ENCODE measurements at regions of chr17 and their contacts with region 1.

Region 1: DNA sequence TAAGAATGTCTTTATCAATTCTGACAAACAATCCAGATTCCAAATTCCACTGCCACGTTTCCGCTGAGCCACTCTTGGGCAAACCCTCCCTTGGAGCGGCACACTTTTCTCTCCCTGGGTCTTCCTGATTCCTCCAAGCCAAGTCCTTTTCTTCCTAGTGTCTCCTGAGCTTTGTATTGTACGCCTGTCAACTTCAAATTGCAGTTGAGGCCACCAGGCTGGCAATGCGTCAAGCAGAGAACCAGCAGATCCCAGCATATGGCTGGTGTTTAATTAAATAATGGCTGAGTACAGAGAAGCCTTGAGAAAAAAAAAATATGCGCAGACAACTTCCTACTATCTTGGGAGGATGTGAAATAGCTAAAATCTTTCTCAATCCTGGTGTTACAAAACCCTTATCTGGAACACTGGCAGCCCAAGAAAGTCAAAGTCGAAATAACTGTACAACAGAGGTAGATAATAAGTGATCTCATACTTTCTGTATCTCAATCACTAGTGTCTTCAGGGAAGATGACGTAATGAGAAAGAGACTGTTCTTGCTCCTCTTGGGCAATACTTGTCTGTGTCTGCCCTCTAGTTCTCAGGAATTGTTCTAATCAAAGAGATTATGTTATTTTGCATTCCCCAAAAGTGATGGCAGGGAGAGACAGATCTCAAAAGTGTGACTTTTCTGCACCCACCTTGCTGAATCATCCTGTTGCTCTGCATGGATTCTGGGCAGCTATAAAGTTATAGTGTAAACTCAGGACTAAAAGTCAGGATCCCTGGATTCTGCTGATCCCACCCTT is 15.0 kb downstream of the SMIM36 start:
- DNase-seq: no peak
- H3K4me3 Mint-ChIP-seq: no peak overlapping the region
- H3K27ac Mint-ChIP-seq: no peak overlapping the region
- H3K4me1 Mint-ChIP-seq: peaks cover 26% of the 10 kb centered on the region
- H3K27me3 Mint-ChIP-seq: no peaks in the 10 kb centered on the region
- CTCF ChIP-seq: no peak

Region 2: DNA sequence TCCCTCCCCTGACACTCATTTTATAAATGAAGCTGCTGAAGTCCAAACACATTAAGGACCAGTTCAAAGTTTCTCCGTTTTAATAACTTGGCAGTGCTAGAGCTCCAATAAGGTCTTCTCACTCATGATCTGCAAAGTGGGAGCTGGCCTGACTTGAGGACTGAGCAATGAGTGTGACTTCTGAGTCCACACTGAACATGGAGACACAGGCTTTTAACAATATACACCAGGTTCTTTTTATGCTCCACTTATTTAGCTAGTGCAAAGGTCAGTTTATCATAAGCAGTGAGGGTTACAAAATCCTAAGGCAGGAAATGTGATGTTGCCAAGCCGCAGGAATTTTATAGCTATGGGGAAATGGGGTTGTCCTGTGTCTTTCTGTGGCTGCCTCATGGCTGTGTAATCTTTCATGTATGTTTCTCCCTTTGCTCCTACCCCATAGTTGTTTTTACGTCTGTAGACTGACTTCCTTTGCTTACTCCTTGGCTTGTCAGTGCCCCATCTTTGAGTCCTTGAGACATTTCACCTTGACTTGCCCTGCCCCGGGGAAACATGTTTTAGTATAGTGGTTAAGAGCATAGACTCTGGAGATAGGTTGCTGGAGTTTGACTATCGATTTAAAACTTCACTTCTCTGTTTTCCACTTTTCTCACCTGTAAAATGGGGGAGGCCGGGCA is 62.5 kb before region 1 on chr17:
- CTCF ChIA-PET with region 1: no interaction called
- intact Hi-C with region 1: loop called (anchors 5 kb)
- DNase-seq: peak; percentile 52
- H3K4me3 Mint-ChIP-seq: peak overlapping the region; percentile 25
- H3K27ac Mint-ChIP-seq: peak overlapping the region; percentile 90
- H3K4me1 Mint-ChIP-seq: peaks cover 57% of the 10 kb centered on the region
- H3K27me3 Mint-ChIP-seq: no peaks in the 10 kb centered on the region
- CTCF ChIP-seq: no peak

Measured in Calu3 (cell line).